Common myeloid progenitor, CD34-positive (primary cell): ENCODE measurements at regions of chr17 and their contacts with region 1.

Region 1: DNA sequence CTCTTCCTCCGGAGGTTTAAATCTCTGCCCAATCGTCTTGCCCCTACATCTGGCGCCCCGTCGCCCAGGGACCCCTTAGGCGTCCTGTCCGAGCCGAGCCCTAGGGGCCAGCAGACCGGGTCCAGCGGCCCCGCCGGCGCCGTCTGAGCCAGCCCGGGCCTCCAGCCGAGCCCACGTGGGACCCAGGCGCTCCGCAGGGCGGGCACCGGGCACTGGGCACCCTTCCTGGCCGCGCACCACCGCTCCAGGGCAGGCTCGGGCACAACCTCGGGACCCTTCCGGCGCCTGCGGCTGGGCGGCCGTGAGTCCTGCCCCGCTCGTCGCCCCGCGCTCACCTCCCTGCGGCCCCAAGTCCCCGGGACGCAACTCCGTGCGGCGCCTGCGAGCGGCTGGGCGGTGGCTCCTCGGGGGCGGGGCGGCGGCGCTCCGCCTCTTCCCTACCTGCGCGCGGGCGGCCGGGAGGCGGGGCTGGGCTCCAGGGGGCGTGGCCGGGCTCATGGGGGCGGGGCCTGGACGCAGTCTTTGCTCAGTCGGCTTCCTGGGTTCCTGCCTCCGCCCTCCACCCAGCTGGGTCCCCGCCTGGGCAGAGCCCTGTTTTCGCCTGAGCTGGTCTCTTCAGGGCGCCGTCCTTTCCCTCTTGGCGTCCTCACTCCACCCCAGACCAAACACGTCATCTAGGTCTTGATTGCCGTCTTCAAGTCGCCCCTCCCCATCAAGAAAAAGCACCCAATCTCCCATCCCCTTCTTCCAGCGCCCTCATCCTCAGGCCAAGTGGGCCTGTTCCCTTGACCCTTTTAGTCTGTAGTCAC is at the start of gene RHBDF2:
- DNase-seq: peak; percentile 65 to 81 (median 77)
- H3K4me3 ChIP-seq: peak within 1 kb of the TSS; percentile 65 to 88 (median 78)
- H3K27ac ChIP-seq: no peak within 1 kb of the TSS
- H3K4me1 ChIP-seq: peaks cover 0 to 57% (median 18%) of the 10 kb centered on the region in 4 experiments
- H3K27me3 ChIP-seq: no peaks in the 10 kb centered on the region

Region 2: GRCh38 chr17:76240461-76241203 is 260.6 kb before region 1 on chr17 and contains the start of gene RNF157:
- CTCF ChIA-PET with region 1: no interaction called
- POLR2A ChIA-PET with region 1: no interaction called
- DNase-seq: peak in 2 of 3 donors; percentile 43 to 55
- H3K4me3 ChIP-seq: peak within 1 kb of the TSS in 5 of 7 experiments; percentile 50 to 70 (median 55)
- H3K27ac ChIP-seq: peak within 1 kb of the TSS in 1 of 2 experiments; percentile 68
- H3K4me1 ChIP-seq: peaks cover 12 to 38% (median 31%) of the 10 kb centered on the region in 4 experiments
- H3K27me3 ChIP-seq: peaks cover 0 to 66% (median 27%) of the 10 kb centered on the region in 5 experiments

Region 3: DNA sequence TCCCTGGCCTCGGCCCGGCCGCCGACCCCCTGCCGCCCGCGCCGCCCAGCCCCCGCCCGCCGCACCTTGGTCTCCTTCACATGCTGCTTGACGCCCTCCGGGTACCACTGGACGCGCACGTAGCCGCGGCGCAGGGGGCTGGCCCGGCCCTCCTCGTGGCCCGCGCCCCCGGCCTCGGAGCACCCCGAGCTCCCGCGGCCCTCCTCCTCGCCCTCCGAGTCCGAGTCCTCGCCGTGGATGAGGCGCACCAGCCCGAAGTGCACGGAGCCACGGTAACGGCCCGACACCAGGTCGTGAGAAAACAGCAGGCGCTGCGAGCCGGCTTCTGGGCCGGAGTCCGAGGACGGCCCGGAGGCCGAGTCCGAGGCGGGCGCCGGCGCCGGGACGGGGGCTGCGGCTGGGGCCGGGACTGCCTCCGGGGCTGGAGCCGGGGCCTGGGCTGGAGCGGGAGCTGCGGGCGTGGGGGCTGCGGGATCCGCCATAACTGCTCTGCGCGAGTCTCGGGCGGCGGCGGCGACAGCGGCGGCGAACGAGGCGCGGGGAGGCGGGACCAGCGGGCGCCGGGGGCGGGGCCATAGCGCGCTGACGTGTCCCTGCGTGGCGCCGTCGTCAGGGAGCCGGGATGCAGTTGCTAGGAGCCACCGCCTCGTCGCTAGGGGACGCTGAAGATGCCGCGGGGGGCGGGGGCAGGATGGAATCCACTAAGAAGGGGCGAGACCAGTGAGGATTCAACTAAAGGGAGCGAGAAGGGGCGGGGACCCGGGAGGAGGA is 48.4 kb before region 1 on chr17 and contains the start of gene UBE2O:
- CTCF ChIA-PET with region 1: interaction called, 787 read pairs
- POLR2A ChIA-PET with region 1: interaction called, 3 read pairs
- DNase-seq: peak; percentile 92 to 94 (median 94)
- H3K4me3 ChIP-seq: peak within 1 kb of the TSS; percentile 69 to 91 (median 82)
- H3K27ac ChIP-seq: peak within 1 kb of the TSS in 1 of 2 experiments; percentile 66
- H3K4me1 ChIP-seq: peaks cover 0 to 18% (median 14%) of the 10 kb centered on the region in 4 experiments
- H3K27me3 ChIP-seq: no peaks in the 10 kb centered on the region